ENCODE measurements at regions of chr6 and their contacts with region 1.

Region 1: GRCh38 chr6:30717042-30717844 is at the start of gene MDC1:
- DNase-seq: peak; percentile 100
- H3K4me3 Mint-ChIP-seq: peak within 1 kb of the TSS; percentile 92
- H3K27ac Mint-ChIP-seq: peak within 1 kb of the TSS; percentile 99
- H3K4me1 Mint-ChIP-seq: peaks cover 41% of the 10 kb centered on the region
- H3K27me3 Mint-ChIP-seq: no peaks in the 10 kb centered on the region
- total RNA-seq, gene MDC1: 79.5 to 88.7 TPM

Region 2: DNA sequence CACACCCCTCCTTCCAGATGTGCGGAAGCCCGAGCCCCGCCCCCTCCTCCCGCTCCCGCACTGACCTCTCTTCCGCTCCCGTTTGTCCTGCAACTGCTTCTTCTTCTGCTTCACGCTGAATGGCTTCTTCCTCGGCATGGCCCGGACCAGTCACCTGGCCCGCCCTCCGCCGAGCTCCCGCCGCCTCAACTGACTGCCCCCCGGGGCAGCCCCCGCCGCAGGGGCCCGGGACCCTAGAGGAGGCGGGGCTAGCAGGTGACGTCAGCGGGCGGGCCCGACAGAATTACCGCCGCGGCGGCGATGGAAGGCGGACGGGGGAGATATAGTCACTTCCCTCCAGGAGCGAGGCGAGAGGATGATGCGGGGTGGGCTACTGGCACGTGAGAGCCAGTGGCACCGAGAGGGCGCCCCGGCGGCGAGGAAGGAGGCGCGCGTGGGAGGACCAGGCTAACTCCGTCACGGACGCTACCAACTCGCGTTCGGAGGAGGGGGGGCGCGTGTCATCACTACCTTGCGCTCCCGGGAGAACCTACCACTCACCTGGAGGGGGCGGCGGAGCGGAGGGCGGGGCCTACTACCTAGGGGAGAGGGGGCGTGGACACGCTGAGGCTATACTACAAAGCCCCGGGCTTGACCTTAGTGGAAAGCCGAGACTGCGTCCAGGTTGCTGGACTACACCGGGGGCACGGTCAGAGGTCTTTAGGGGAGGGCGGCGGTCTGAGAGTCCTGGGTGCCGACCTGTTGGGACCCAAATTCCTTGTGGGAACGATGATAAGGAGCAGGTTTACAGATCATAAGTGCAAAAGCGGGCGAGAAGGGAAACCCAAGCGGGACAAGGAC is 161.0 kb before region 1 on chr6 and contains the start of gene GNL1:
- CTCF ChIA-PET with region 1: no interaction called
- POLR2A ChIA-PET with region 1: interaction called, 3 read pairs
- intact Hi-C with region 1: loop called (anchors 2 kb)
- DNase-seq: peak; percentile 100
- H3K4me3 Mint-ChIP-seq: peak within 1 kb of the TSS; percentile 97
- H3K27ac Mint-ChIP-seq: peak within 1 kb of the TSS; percentile 98
- H3K4me1 Mint-ChIP-seq: peaks cover 44% of the 10 kb centered on the region
- H3K27me3 Mint-ChIP-seq: no peaks in the 10 kb centered on the region
- total RNA-seq, gene GNL1: 94.0 to 95.8 TPM

Region 3: GRCh38 chr6:30646458-30647241 is 70.6 kb before region 1 on chr6 and contains the start of gene C6orf136:
- CTCF ChIA-PET with region 1: interaction called, 3 read pairs
- POLR2A ChIA-PET with region 1: interaction called, 3 read pairs
- intact Hi-C with region 1: loop called (anchors 2 kb)
- DNase-seq: peak; percentile 96
- H3K4me3 Mint-ChIP-seq: peak within 1 kb of the TSS; percentile 89
- H3K27ac Mint-ChIP-seq: peak within 1 kb of the TSS; percentile 89
- H3K4me1 Mint-ChIP-seq: peaks cover 25% of the 10 kb centered on the region
- H3K27me3 Mint-ChIP-seq: no peaks in the 10 kb centered on the region
- total RNA-seq, gene C6orf136: 32.7 to 37.5 TPM

Region 4: DNA sequence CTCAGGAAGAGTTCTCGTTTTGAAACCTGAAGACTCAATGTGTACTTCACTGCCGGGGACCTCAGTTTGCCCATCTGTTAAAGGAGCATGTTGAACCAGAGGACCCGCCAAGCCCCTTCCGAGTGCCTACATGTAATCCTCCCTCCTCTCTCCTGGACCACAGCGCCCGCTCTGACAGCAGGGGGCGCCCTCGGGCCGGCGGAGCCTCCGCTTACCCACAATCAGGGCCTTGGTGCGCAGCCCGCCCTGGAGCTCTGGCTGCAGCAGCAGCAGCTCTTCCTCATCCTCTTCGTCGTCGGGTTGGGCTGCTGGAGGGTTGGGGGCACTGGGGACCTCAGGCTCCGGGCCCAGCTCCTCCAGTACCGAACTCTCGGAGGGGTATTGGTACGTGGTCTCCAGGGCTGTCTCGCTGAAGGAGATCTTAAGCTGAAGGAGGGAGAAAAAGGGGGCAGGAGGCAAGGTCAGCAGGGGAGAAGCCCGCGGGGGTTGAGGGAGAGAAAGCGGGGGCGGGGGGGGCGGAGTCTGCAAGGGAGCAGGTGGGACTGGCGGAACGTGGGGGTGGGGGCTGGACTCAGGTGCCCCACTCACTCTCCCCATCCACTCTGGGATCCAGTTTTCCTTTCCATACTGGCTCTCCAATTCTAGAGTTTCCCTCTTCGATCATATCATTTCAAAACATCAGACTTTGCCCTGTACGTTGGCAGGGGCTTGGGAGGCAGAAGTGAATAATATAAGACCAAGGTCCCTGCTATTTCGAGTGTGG is 38.1 kb before region 1 on chr6:
- CTCF ChIA-PET with region 1: interaction called, 628 read pairs
- POLR2A ChIA-PET with region 1: interaction called, 209 read pairs
- intact Hi-C with region 1: loop called (anchors 1 kb)
- DNase-seq: peak; percentile 94
- H3K4me3 Mint-ChIP-seq: peak overlapping the region; percentile 100
- H3K27ac Mint-ChIP-seq: peak overlapping the region; percentile 99
- H3K4me1 Mint-ChIP-seq: peaks cover 16% of the 10 kb centered on the region
- H3K27me3 Mint-ChIP-seq: no peaks in the 10 kb centered on the region

Region 5: DNA sequence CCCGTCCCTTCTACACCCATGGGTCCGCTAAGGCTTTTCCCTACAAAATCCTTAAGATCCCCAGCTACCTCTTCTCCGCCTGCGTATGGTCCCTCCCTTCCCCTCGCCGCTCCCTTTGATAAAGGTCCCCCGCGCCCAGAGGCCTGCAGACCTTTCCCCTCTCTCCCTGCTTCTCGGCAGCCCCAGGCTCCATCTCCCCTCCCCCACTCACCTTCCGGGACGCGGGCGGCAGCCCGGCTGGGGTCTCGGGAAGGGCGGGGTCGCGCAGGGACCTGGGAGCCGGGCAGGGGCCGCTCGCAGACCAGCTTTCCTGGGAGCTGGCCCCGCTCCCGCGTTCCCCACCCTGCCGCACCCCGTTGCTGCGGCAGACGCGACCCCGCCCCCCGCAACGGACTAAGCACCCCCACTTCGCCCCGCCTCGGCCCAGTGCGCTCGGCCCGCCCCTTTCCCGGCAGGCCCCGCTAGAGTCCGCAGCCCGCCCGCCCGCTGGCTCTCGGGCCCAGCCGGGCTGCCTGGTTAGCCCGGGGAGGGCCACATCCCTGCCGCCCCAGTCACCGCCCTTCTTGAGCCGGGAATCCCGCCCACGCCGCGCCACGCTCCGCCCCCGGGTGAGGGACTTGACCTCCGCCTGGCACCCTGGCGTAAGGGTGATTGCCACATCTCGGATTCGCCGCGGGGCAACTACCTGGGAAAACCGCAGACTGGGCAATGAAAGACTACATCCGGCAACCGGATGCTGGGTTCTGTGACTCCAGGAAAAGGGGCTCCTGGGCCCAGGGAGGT is 25.3 kb after region 1 on chr6 and contains the start of gene FLOT1:
- CTCF ChIA-PET with region 1: interaction called, 5 read pairs
- POLR2A ChIA-PET with region 1: interaction called, 7 read pairs
- intact Hi-C with region 1: loop called (anchors 1 kb)
- DNase-seq: peak; percentile 99
- H3K4me3 Mint-ChIP-seq: peak within 1 kb of the TSS; percentile 99
- H3K27ac Mint-ChIP-seq: peak within 1 kb of the TSS; percentile 97
- H3K4me1 Mint-ChIP-seq: peaks cover 62% of the 10 kb centered on the region
- H3K27me3 Mint-ChIP-seq: no peaks in the 10 kb centered on the region
- total RNA-seq, gene FLOT1: 226 to 231 TPM